ENCODE measurements at regions of chr6 and their contacts with region 1.

Region 1: GRCh38 chr6:118893807-118894424 is at the start of gene ASF1A:
- DNase-seq: peak; percentile 98
- H3K4me3 Mint-ChIP-seq: peak within 1 kb of the TSS; percentile 88
- H3K27ac Mint-ChIP-seq: peak within 1 kb of the TSS; percentile 97
- H3K4me1 Mint-ChIP-seq: peaks cover 50% of the 10 kb centered on the region
- H3K27me3 Mint-ChIP-seq: no peaks in the 10 kb centered on the region
- total RNA-seq, gene ASF1A: 30.3 to 31.4 TPM

Region 2: DNA sequence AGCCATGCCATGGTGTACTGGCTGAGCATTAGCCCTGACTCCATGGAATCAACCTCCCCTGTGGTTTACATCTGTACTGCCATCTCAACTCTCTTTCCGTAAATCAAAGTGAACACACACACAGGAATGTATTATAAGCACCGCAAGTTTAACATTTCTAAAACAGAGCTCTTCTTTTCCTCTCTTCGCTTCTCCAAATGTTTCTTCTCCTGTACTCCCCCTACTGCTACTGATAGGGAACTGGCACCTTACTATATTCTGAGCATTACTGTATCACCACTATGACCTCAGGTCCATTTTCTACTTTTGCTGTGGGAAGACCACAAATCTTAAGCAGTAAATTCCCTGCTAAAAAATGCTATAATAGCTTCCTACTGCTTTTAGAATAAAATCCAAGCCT is 1117.5 kb before region 1 on chr6:
- CTCF ChIA-PET with region 1: no interaction called
- intact Hi-C with region 1: no loop called
- DNase-seq: no peak
- H3K4me3 Mint-ChIP-seq: no peak overlapping the region
- H3K27ac Mint-ChIP-seq: no peak overlapping the region
- H3K4me1 Mint-ChIP-seq: no peaks in the 10 kb centered on the region
- H3K27me3 Mint-ChIP-seq: peaks cover 9% of the 10 kb centered on the region

Region 3: GRCh38 chr6:118283766-118284165 is 610.1 kb before region 1 on chr6:
- CTCF ChIA-PET with region 1: no interaction called
- intact Hi-C with region 1: loop called (anchors 1 kb)
- DNase-seq: peak; percentile 69
- H3K4me3 Mint-ChIP-seq: no peak overlapping the region
- H3K27ac Mint-ChIP-seq: no peak overlapping the region
- H3K4me1 Mint-ChIP-seq: peaks cover 2% of the 10 kb centered on the region
- H3K27me3 Mint-ChIP-seq: peaks cover 3% of the 10 kb centered on the region

Region 4: DNA sequence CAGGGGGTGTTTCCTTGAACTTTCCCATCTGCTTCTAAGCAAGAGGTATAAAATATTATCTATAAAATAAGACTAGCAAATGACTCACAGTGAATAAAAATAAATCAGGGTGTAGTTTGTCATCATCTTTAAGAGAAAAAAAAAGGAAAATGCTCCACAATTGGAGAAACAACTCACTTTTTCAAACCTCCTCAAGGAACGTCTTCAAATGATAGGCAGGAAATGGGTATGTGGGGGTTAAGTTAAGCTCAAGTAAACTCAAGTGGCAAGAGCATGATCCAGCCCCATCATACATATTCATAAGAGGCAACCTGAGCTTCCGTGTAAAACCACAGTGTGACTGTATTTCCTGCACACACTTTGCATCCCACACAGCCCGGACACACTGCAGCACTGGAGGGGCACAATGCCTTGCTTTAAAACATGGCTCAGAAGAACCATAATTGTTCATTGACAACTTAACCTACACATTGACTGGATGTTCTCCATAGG is 184.0 kb before region 1 on chr6:
- CTCF ChIA-PET with region 1: interaction called, 4 read pairs
- intact Hi-C with region 1: loop called (anchors 1 kb)
- DNase-seq: peak; percentile 88
- H3K4me3 Mint-ChIP-seq: peak overlapping the region; percentile 82
- H3K27ac Mint-ChIP-seq: peak overlapping the region; percentile 98
- H3K4me1 Mint-ChIP-seq: peaks cover 70% of the 10 kb centered on the region
- H3K27me3 Mint-ChIP-seq: no peaks in the 10 kb centered on the region

Region 5: GRCh38 chr6:118810420-118811027 is 83.4 kb before region 1 on chr6:
- CTCF ChIA-PET with region 1: interaction called, 3 read pairs
- intact Hi-C with region 1: loop called (anchors 1 kb)
- DNase-seq: peak; percentile 79
- H3K4me3 Mint-ChIP-seq: no peak overlapping the region
- H3K27ac Mint-ChIP-seq: peak overlapping the region; percentile 75
- H3K4me1 Mint-ChIP-seq: peaks cover 47% of the 10 kb centered on the region
- H3K27me3 Mint-ChIP-seq: no peaks in the 10 kb centered on the region

Region 6: GRCh38 chr6:118934461-118935330 is 40.8 kb after region 1 on chr6 and contains the start of gene MCM9:
- CTCF ChIA-PET with region 1: interaction called, 3 read pairs
- intact Hi-C with region 1: loop called (anchors 1 kb)
- DNase-seq: peak; percentile 89
- H3K4me3 Mint-ChIP-seq: peak within 1 kb of the TSS; percentile 87
- H3K27ac Mint-ChIP-seq: peak within 1 kb of the TSS; percentile 90
- H3K4me1 Mint-ChIP-seq: peaks cover 29% of the 10 kb centered on the region
- H3K27me3 Mint-ChIP-seq: no peaks in the 10 kb centered on the region
- total RNA-seq, gene MCM9: 16.3 to 16.4 TPM

Region 7: DNA sequence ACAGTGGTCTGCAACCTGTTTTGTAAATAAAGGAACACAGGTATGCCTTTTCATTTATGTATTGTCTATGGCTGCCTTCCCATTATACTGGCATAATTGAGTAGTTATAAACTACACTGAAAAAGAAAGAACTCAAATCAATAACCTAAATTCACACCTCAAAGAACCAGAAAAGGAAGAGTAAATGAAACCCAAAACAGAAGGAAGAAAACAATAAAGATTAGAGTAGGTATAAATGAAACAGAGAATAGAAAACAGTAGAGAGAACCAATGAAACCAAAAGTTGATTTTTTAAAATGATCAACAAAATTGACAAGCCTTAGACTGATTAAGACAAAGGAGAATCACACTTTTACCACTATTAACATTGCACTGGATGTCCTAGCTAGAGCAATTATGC is 149.9 kb after region 1 on chr6:
- CTCF ChIA-PET with region 1: no interaction called
- intact Hi-C with region 1: no loop called
- DNase-seq: no peak
- H3K4me3 Mint-ChIP-seq: no peak overlapping the region
- H3K27ac Mint-ChIP-seq: no peak overlapping the region
- H3K4me1 Mint-ChIP-seq: peaks cover 32% of the 10 kb centered on the region
- H3K27me3 Mint-ChIP-seq: no peaks in the 10 kb centered on the region

Region 8: GRCh38 chr6:119250036-119250435 is 356.1 kb after region 1 on chr6:
- CTCF ChIA-PET with region 1: no interaction called
- intact Hi-C with region 1: no loop called
- DNase-seq: no peak
- H3K4me3 Mint-ChIP-seq: no peak overlapping the region
- H3K27ac Mint-ChIP-seq: no peak overlapping the region
- H3K4me1 Mint-ChIP-seq: peaks cover 2% of the 10 kb centered on the region
- H3K27me3 Mint-ChIP-seq: no peaks in the 10 kb centered on the region

Region 9: GRCh38 chr6:119273272-119274196 is 379.6 kb after region 1 on chr6:
- CTCF ChIA-PET with region 1: no interaction called
- intact Hi-C with region 1: no loop called
- DNase-seq: no peak
- H3K4me3 Mint-ChIP-seq: no peak overlapping the region
- H3K27ac Mint-ChIP-seq: no peak overlapping the region
- H3K4me1 Mint-ChIP-seq: peaks cover 8% of the 10 kb centered on the region
- H3K27me3 Mint-ChIP-seq: no peaks in the 10 kb centered on the region

Region 10: GRCh38 chr6:119313937-119314884 is 420.3 kb after region 1 on chr6:
- CTCF ChIA-PET with region 1: no interaction called
- intact Hi-C with region 1: loop called (anchors 2 kb)
- DNase-seq: peak; percentile 65
- H3K4me3 Mint-ChIP-seq: peak overlapping the region; percentile 41
- H3K27ac Mint-ChIP-seq: peak overlapping the region; percentile 92
- H3K4me1 Mint-ChIP-seq: peaks cover 58% of the 10 kb centered on the region
- H3K27me3 Mint-ChIP-seq: no peaks in the 10 kb centered on the region